Heart left ventricle (tissue), 16 donors: ENCODE measurements at regions of chr1 and their contacts with region 1.

Region 1: DNA sequence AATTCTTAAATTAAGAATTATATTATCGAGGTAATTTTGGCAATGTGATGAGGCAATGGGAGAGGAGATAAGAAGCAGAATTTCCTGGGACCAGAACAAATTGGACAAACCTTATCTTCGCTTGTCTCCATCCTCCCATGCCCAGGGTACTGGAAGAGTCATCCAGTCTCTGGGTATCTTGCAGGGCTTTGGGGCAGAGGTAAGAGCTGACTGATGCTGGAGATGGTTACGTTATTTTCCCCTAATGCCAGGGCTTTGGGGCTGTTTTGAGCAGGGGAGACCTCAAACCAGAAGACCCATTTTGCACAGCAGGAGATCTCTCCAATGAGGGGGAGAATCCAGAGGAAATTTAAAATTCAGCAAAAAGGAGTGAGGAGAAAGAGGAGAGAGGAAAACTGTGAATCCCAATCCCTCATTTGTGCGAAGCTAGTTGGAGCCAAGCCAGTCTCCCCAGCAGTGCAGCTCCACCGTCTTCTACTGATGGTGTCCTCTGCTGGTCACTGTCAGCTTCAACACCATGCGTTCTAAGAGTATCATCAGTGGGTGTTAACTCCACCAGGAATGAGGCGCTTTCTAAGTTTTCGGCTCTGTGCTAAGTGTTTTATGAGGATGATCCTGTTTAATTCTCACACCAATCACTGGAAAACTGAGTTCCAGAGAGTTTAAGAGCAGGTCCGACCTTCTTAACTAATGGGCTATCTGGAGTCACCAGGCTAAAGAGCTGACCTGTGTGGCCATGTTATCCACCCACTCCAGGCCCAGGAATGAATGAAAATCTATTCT is 86.8 kb upstream of the CD34 start:
- DNase-seq: peak; percentile 75 to 86 (median 84)
- ATAC-seq: peak; percentile 66 to 92 (median 84)
- H3K4me3 ChIP-seq: no peak overlapping the region
- H3K27ac ChIP-seq: no peak overlapping the region
- H3K4me1 ChIP-seq: peaks cover 0 to 7% (median 0%) of the 10 kb centered on the region in 12 donors
- H3K27me3 ChIP-seq: no peaks in the 10 kb centered on the region
- CTCF ChIP-seq: peak; percentile 71 to 90 (median 80)
- POLR2A ChIP-seq: no peak

Region 2: GRCh38 chr1:207885129-207886032 is 112.3 kb before region 1 on chr1:
- intact Hi-C with region 1: loop called in 3 of 10 experiments (anchors 1 kb)
- DNase-seq: peak; percentile 85 to 91 (median 87)
- ATAC-seq: peak; percentile 84 to 93 (median 90)
- H3K4me3 ChIP-seq: no peak overlapping the region
- H3K27ac ChIP-seq: peak overlapping the region in 11 of 12 donors; percentile 51 to 91 (median 74)
- H3K4me1 ChIP-seq: peaks cover 16 to 84% (median 56%) of the 10 kb centered on the region in 12 donors
- H3K27me3 ChIP-seq: no peaks in the 10 kb centered on the region
- CTCF ChIP-seq: peak; percentile 93 to 98 (median 96)
- POLR2A ChIP-seq: peak in 1 of 2 donors; percentile 10

Region 3: GRCh38 chr1:207973898-207974568 is 23.6 kb before region 1 on chr1:
- intact Hi-C with region 1: loop called in 1 of 10 experiments (anchors 2 kb)
- DNase-seq: no peak
- ATAC-seq: no peak
- H3K4me3 ChIP-seq: no peak overlapping the region
- H3K27ac ChIP-seq: no peak overlapping the region
- H3K4me1 ChIP-seq: peaks cover 0 to 2% (median 0%) of the 10 kb centered on the region in 12 donors
- H3K27me3 ChIP-seq: no peaks in the 10 kb centered on the region
- CTCF ChIP-seq: no peak
- POLR2A ChIP-seq: no peak

Region 4: GRCh38 chr1:208010487-208011079 is 12.9 kb after region 1 on chr1:
- intact Hi-C with region 1: no loop called
- DNase-seq: no peak
- ATAC-seq: peak in 1 of 4 donors; percentile 26
- H3K4me3 ChIP-seq: no peak overlapping the region
- H3K27ac ChIP-seq: no peak overlapping the region
- H3K4me1 ChIP-seq: peaks cover 0 to 13% (median 0%) of the 10 kb centered on the region in 12 donors
- H3K27me3 ChIP-seq: no peaks in the 10 kb centered on the region
- CTCF ChIP-seq: no peak
- POLR2A ChIP-seq: no peak